Vagina (tissue), 2 donors: ENCODE measurements at regions of chr20 and their contacts with region 1.

Region 1: DNA sequence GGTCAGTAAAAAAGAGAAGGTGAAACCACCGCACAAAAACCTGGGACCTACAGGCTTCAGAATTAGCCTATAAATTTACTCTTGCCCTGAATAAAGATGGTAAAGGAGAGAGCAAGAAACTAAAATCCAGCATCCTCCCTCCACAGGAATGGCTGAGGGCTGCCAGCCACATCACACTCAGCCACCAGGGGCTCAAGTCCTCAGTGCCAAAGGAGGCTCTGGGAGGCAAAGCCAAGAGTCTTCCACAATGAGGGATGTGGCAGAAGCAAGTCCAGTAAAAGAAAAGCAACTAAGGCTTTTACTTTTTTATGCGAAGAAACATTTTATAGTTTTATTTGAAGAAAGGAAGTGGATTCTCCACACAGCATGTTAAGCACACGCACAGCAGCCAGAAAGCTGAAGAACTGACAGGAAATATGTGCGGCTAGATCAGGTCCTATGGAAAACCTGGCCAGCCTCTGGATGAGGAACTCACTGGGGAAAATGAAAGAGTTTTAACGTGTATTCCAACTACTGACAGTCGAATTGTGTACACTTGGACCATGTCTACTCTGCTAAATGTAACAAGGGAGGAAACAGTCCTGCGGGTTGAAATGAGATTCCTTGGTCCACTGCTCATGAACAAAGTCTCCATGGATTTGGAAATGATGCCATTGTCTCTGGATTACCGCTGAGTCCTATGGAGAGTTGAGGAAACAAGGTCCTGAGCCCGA is 219.4 kb upstream of the SSTR4 start:
- DNase-seq: no peak
- H3K4me3 ChIP-seq: no peak overlapping the region
- H3K27ac ChIP-seq: no peak overlapping the region
- H3K4me1 ChIP-seq: no peaks in the 10 kb centered on the region
- H3K27me3 ChIP-seq: no peaks in the 10 kb centered on the region
- CTCF ChIP-seq: peak in 1 of 3 experiments; percentile 17
- POLR2A ChIP-seq: no peak

Region 2: DNA sequence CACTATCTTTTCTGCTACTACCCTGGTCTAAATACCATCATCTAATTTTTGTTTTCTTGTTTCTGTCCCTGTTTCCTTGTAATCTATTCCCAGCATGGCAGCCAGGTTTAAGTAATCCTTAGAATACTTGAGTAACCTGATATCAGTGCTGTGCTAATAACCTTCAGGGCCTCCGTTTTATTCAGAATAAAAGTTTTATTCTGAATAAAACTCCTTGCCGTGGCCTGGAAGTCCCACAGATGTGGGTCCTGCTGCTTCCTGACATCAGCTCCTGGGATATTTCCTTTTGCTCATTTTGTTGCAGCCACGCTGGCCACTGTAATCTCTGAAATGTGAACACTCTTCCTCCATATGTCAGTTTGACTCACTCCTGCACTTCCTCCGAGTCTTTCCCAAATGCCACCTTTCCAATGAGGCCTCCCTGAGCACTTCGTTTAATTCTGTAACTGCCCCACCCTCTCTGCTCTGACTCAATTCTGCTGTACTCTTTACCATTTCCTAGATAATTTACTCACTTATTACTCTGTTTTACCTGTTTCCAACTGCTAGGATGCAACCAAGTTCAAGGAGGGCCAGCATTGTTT is 117.4 kb before region 1 on chr20:
- intact Hi-C with region 1: loop called (anchors 5 kb)
- DNase-seq: peak in 1 of 2 donors; percentile 25
- H3K4me3 ChIP-seq: no peak overlapping the region
- H3K27ac ChIP-seq: no peak overlapping the region
- H3K4me1 ChIP-seq: no peaks in the 10 kb centered on the region
- H3K27me3 ChIP-seq: no peaks in the 10 kb centered on the region
- CTCF ChIP-seq: no peak
- POLR2A ChIP-seq: no peak

Region 3: GRCh38 chr20:22918286-22918983 is 102.7 kb after region 1 on chr20:
- intact Hi-C with region 1: no loop called
- DNase-seq: no peak
- H3K4me3 ChIP-seq: no peak overlapping the region
- H3K27ac ChIP-seq: no peak overlapping the region
- H3K4me1 ChIP-seq: peaks cover 10% of the 10 kb centered on the region
- H3K27me3 ChIP-seq: no peaks in the 10 kb centered on the region
- CTCF ChIP-seq: no peak
- POLR2A ChIP-seq: no peak

Region 4: GRCh38 chr20:23027721-23028120 is 212.0 kb after region 1 on chr20:
- intact Hi-C with region 1: no loop called
- DNase-seq: no peak
- H3K4me3 ChIP-seq: no peak overlapping the region
- H3K27ac ChIP-seq: no peak overlapping the region
- H3K4me1 ChIP-seq: no peaks in the 10 kb centered on the region
- H3K27me3 ChIP-seq: no peaks in the 10 kb centered on the region
- CTCF ChIP-seq: no peak
- POLR2A ChIP-seq: no peak